ENCODE measurements at regions of chr21 and their contacts with region 1.

Region 1: GRCh38 chr21:39349211-39350093 is 564 bp upstream of the HMGN1 start:
- DNase-seq: peak; percentile 96
- H3K4me3 Mint-ChIP-seq: peak overlapping the region; percentile 72
- H3K27ac Mint-ChIP-seq: peak overlapping the region; percentile 77
- H3K4me1 Mint-ChIP-seq: peaks cover 28% of the 10 kb centered on the region
- H3K27me3 Mint-ChIP-seq: no peaks in the 10 kb centered on the region
- CTCF ChIP-seq: no peak

Region 2: DNA sequence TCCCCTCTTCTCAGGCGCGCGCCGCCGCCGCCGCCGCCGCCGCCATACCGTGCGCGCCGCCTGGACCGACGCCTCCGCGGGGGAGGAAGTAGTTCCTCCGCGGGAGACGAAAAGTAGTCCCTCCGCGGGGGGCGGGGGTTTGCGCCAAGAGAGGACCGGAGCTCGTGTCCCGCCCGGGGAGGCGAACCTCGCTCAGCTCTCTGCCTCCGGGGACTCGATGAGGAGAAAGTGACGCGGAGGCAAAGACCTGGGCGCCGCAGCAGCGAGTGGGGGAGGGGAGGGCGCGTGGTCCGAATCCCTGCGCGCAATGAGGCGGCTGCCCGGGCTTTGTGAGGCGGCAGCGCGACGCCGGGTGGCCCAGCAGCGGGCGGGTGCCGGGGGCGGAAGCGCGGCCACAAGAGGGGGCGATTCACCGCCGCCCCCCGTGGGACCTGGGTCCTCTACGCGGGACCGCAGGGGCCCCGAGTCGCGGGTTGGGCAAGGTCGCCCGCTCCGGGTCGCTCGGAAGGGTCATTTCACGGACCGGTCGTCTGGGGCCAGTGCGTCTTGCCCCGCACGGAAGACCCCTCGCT is 35.8 kb before region 1 on chr21 and contains the start of gene BRWD1:
- CTCF ChIA-PET with region 1: interaction called, 3 read pairs
- intact Hi-C with region 1: loop called (anchors 5 kb)
- DNase-seq: peak; percentile 81
- H3K4me3 Mint-ChIP-seq: peak within 1 kb of the TSS; percentile 96
- H3K27ac Mint-ChIP-seq: peak within 1 kb of the TSS; percentile 93
- H3K4me1 Mint-ChIP-seq: peaks cover 8% of the 10 kb centered on the region
- H3K27me3 Mint-ChIP-seq: no peaks in the 10 kb centered on the region
- CTCF ChIP-seq: no peak
- total RNA-seq, gene BRWD1: 27.6 and 28.8 TPM in 2 replicates

Region 3: GRCh38 chr21:39924577-39925308 is 575.3 kb after region 1 on chr21:
- CTCF ChIA-PET with region 1: no interaction called
- intact Hi-C with region 1: no loop called
- DNase-seq: peak; percentile 2
- H3K4me3 Mint-ChIP-seq: no peak overlapping the region
- H3K27ac Mint-ChIP-seq: no peak overlapping the region
- H3K4me1 Mint-ChIP-seq: no peaks in the 10 kb centered on the region
- H3K27me3 Mint-ChIP-seq: peaks cover 17% of the 10 kb centered on the region
- CTCF ChIP-seq: no peak

Measured in Calu3 (cell line).